Naive thymus-derived CD4-positive, alpha-beta T cell (primary cell): ENCODE measurements at regions of chr7 and their contacts with region 1.

Region 1: DNA sequence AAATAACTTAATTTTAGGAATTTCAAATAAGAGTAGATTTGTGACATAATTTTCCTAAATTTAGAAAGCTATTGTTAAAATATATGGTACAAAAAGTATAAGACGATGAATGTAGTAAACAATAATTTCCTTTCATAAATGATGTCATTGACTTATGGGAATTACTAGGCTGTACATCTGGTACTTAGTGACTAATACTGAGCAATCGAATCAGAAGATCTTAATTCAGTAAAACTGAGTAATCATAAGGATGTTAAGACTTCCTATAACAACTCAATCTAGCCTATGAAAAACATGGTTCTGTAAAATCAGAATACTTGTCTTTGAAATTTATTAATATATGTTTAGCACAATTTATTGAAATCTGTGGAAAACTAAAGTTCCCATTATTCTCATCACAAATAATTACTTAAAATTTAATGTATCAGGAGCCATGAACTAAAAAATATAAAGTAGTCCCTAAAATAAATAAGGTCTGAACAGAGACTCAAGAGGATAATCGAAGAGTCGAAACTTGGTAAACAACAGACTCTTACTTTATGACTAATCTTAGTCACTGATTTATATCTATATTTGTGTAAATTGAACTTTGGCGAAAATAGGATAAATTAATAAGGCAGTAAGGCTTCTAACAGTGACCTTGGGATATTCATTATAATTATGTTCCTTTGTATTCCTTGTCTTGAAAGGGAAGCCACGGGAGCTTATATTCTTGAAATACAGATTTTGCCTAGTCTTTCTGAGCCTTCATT is 142.1 kb downstream of the HGF start:
- DNase-seq: no peak
- ATAC-seq: no peak
- H3K4me3 ChIP-seq: no peak overlapping the region
- H3K4me3 Mint-ChIP-seq: no peak overlapping the region
- H3K27ac ChIP-seq: no peak overlapping the region
- H3K27ac Mint-ChIP-seq: no peak overlapping the region
- H3K4me1 ChIP-seq: no peaks in the 10 kb centered on the region
- H3K4me1 Mint-ChIP-seq: no peaks in the 10 kb centered on the region
- H3K27me3 ChIP-seq: no peaks in the 10 kb centered on the region
- H3K27me3 Mint-ChIP-seq: no peaks in the 10 kb centered on the region

Region 2: GRCh38 chr7:81562581-81562980 is 65.1 kb before region 1 on chr7:
- CTCF ChIA-PET with region 1: no interaction called
- POLR2A ChIA-PET with region 1: no interaction called
- intact Hi-C with region 1: loop called in 1 of 2 experiments (anchors 10 kb)
- DNase-seq: no peak
- ATAC-seq: no peak
- H3K4me3 ChIP-seq: no peak overlapping the region
- H3K4me3 Mint-ChIP-seq: no peak overlapping the region
- H3K27ac ChIP-seq: no peak overlapping the region
- H3K27ac Mint-ChIP-seq: no peak overlapping the region
- H3K4me1 ChIP-seq: no peaks in the 10 kb centered on the region
- H3K4me1 Mint-ChIP-seq: no peaks in the 10 kb centered on the region
- H3K27me3 ChIP-seq: no peaks in the 10 kb centered on the region
- H3K27me3 Mint-ChIP-seq: no peaks in the 10 kb centered on the region

Region 3: GRCh38 chr7:81583882-81584533 is 43.7 kb before region 1 on chr7:
- CTCF ChIA-PET with region 1: no interaction called
- POLR2A ChIA-PET with region 1: no interaction called
- intact Hi-C with region 1: no loop called
- DNase-seq: no peak
- ATAC-seq: no peak
- H3K4me3 ChIP-seq: no peak overlapping the region
- H3K4me3 Mint-ChIP-seq: no peak overlapping the region
- H3K27ac ChIP-seq: no peak overlapping the region
- H3K27ac Mint-ChIP-seq: no peak overlapping the region
- H3K4me1 ChIP-seq: no peaks in the 10 kb centered on the region
- H3K4me1 Mint-ChIP-seq: no peaks in the 10 kb centered on the region
- H3K27me3 ChIP-seq: no peaks in the 10 kb centered on the region
- H3K27me3 Mint-ChIP-seq: no peaks in the 10 kb centered on the region

Region 4: DNA sequence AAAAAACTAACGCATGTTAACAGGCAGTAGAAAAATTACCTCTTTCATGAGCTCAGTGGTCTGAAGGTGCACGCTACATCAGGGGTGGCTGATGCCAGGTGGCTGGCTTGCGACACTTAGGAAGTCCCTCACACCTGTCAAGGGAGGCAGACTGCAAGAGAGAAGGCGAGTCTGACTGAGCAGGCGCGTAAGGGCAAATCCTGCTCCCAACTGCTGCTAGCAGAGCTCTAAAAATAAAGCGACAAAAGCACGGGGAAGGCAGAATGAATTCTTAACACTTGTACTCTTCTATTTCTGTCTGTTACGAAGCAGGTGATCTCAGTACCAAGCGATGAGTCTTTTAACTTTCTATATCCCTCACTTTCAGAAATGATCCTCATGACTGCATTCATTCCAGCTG is 782.7 kb after region 1 on chr7:
- CTCF ChIA-PET with region 1: no interaction called
- POLR2A ChIA-PET with region 1: no interaction called
- intact Hi-C with region 1: no loop called
- DNase-seq: no peak
- ATAC-seq: no peak
- H3K4me3 ChIP-seq: no peak overlapping the region
- H3K4me3 Mint-ChIP-seq: no peak overlapping the region
- H3K27ac ChIP-seq: no peak overlapping the region
- H3K27ac Mint-ChIP-seq: no peak overlapping the region
- H3K4me1 ChIP-seq: no peaks in the 10 kb centered on the region
- H3K4me1 Mint-ChIP-seq: no peaks in the 10 kb centered on the region
- H3K27me3 ChIP-seq: no peaks in the 10 kb centered on the region
- H3K27me3 Mint-ChIP-seq: no peaks in the 10 kb centered on the region